WTC11 (cell line): ENCODE measurements at regions of chr18 and their contacts with region 1.

Region 1: DNA sequence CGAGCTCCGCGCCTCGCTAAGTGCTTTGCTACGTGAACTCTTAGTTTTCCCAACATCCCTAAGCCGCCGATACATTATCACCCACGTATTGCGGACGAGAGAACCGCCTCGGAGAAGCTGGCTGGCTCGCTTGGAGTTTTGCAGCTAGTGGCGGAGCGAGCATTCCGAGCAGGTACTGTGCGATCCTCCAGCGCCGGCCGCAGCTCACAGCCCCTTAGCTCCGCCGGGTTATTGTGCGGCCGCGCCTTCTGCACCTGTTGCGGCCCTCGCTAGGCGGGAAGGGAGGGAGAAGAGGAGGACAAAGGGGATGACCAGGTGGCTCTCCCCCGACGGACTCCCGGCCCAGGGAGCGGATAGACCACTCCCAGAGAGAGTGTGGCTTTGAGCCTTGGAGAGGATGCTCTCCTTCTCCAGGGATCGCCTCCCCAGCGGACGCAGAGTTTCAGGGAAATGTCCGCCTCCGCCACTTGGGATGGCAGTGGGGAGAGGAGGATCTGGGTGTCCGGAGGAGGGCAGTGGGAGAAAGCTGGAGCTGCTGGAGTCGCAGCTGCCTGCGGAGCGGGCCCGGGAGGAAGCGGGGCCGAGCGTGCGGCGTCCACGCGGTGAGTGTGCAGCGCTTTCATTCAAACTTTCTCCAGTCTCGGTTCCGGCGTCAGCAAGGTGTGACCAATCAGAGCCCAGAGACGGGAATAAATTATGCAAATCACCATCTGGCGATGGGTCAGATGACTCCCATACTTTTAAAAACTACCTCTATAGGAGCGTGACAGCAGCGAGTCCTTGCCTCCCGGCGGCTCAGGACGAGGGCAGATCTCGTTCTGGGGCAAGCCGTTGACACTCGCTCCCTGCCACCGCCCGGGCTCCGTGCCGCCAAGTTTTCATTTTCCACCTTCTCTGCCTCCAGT is at the start of gene LIPG:
- DNase-seq: peak; percentile 67
- ATAC-seq: peak; percentile 81
- H3K4me3 Mint-ChIP-seq: peak within 1 kb of the TSS; percentile 86
- H3K27ac Mint-ChIP-seq: peak within 1 kb of the TSS; percentile 89
- H3K4me1 Mint-ChIP-seq: peaks cover 26% of the 10 kb centered on the region
- H3K27me3 Mint-ChIP-seq: peaks cover 44% of the 10 kb centered on the region
- CTCF ChIP-seq: no peak
- total RNA-seq, gene LIPG: 5.5 to 6.8 TPM (median 6.1 TPM) in 3 replicates

Region 2: GRCh38 chr18:49728542-49728941 is 167.0 kb after region 1 on chr18:
- CTCF ChIA-PET with region 1: interaction called, 10 read pairs
- POLR2A ChIA-PET with region 1: no interaction called
- DNase-seq: peak; percentile 81
- ATAC-seq: peak; percentile 38
- H3K4me3 Mint-ChIP-seq: no peak overlapping the region
- H3K27ac Mint-ChIP-seq: no peak overlapping the region
- H3K4me1 Mint-ChIP-seq: peaks cover 38% of the 10 kb centered on the region
- H3K27me3 Mint-ChIP-seq: no peaks in the 10 kb centered on the region
- CTCF ChIP-seq: peak; percentile 69